ENCODE measurements at regions of chr12 and their contacts with region 1.

Region 1: GRCh38 chr12:85468356-85469157 is 188.5 kb downstream of the ALX1 start:
- DNase-seq: peak; percentile 9
- H3K4me3 ChIP-seq: peak overlapping the region; percentile 23 to 35
- H3K27ac ChIP-seq: peak overlapping the region in 1 of 2 donors; percentile 41
- H3K4me1 ChIP-seq: no peaks in the 10 kb centered on the region
- H3K27me3 ChIP-seq: no peaks in the 10 kb centered on the region
- CTCF ChIP-seq: peak; percentile 32 to 78 (median 58)
- POLR2A ChIP-seq: no peak

Region 2: DNA sequence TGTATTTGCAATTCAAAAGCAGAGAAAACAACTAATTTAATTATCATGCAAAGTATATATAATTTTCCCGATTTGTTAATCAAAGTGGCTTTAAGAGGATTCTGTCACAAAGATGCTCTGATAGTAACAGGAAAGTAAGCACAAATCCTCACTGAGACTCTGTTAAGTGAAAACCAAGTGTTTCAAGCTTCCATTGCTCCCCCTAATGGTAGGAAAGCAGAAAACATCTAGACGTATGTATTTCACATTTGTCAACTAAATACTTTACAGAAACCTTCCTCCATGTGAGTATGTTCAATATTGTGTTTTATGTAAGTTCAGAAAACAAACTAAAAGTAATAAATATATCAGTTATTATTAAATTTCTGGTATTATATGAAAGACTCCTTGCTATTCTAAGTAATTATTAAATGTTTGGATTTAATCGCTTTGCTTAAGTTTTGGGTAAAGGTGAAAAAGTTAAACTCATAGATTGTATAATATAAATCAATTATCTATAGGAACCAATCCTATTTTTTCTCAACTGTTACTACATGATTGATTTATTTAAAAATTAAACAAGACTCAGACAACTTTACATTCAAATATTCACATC is 404.0 kb after region 1 on chr12:
- intact Hi-C with region 1: loop called (anchors 5 kb)
- DNase-seq: no peak
- H3K4me3 ChIP-seq: no peak overlapping the region
- H3K27ac ChIP-seq: no peak overlapping the region
- H3K4me1 ChIP-seq: no peaks in the 10 kb centered on the region
- H3K27me3 ChIP-seq: no peaks in the 10 kb centered on the region
- CTCF ChIP-seq: peak; percentile 17 to 65 (median 50)
- POLR2A ChIP-seq: no peak

Measured in prostate gland (tissue), 2 donors.